GM12878 (cell line): ENCODE measurements at regions of chr4 and their contacts with region 1.

Region 1: DNA sequence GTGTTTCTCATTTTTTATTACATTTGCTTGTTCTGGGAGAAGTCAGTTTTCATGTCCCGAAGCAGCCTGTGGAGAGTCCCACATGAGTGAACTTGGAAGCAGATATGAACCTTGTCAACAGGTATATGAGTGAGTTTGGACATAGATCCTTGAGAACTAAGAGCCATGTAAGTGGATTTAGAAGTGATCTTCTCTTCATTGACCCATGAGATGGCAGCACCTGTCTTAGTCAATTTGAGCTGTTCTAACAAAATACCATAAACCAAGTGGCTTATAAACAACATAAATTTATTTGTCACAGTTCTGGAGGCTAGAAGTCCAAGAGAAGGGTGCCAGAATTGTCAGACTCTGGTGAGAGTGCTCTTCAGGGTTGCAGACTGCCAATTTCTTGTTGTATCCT is 1043.8 kb downstream of the ADGRL3 start:
- DNase-seq: no peak
- ATAC-seq: no peak
- H3K4me3 ChIP-seq: no peak overlapping the region
- H3K27ac ChIP-seq: no peak overlapping the region
- H3K4me1 ChIP-seq: no peaks in the 10 kb centered on the region
- H3K27me3 ChIP-seq: no peaks in the 10 kb centered on the region
- CTCF ChIP-seq: no peak; a peak in 1 of 6 replicates
- EP300 ChIP-seq: no peak
- POLR2A ChIP-seq: no peak
- RAD21 ChIP-seq: peak; percentile 31; the same call in 1 of the 2 replicates

Region 2: GRCh38 chr4:61824454-61824853 is 419.4 kb before region 1 on chr4:
- CTCF ChIA-PET with region 1: no interaction called
- POLR2A ChIA-PET with region 1: no interaction called
- RAD21 ChIA-PET with region 1: no interaction called
- SMC1A ChIA-PET with region 1: no interaction called
- in situ Hi-C with region 1: no loop called
- intact Hi-C with region 1: no loop called
- DNase-seq: no peak
- ATAC-seq: no peak
- H3K4me3 ChIP-seq: no peak overlapping the region
- H3K27ac ChIP-seq: no peak overlapping the region
- H3K4me1 ChIP-seq: no peaks in the 10 kb centered on the region
- H3K27me3 ChIP-seq: no peaks in the 10 kb centered on the region
- CTCF ChIP-seq: no peak
- EP300 ChIP-seq: no peak
- POLR2A ChIP-seq: no peak
- RAD21 ChIP-seq: no peak

Region 3: DNA sequence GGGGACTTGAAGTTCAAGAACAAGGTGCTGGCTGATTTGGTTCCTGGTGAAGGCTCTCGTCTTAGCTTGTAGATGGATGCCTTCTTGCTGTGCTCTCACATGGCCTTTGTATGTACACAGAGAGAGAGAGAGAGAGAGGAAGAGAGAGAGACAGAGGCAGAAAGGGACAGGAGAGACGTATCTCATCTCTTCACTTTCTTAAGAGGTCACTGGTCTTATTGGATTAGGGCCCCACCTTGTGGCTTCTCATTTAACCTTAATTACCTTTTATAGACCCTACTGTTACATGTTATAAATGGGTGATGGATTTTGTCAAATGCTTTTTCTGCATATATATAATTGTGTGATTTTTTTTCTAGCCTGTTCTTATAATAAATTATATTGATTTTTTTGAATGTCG is 400.5 kb after region 1 on chr4:
- CTCF ChIA-PET with region 1: interaction called, 15 read pairs
- POLR2A ChIA-PET with region 1: no interaction called
- RAD21 ChIA-PET with region 1: interaction called, 12 read pairs
- SMC1A ChIA-PET with region 1: interaction called, 15 read pairs
- in situ Hi-C with region 1: no loop called
- intact Hi-C with region 1: no loop called
- DNase-seq: no peak
- ATAC-seq: peak; percentile 86
- H3K4me3 ChIP-seq: no peak overlapping the region
- H3K27ac ChIP-seq: no peak overlapping the region
- H3K4me1 ChIP-seq: no peaks in the 10 kb centered on the region
- H3K27me3 ChIP-seq: no peaks in the 10 kb centered on the region
- CTCF ChIP-seq: peak in 1 of 3 experiments; percentile 45; a peak in 2 of 6 replicates
- EP300 ChIP-seq: no peak
- POLR2A ChIP-seq: no peak
- RAD21 ChIP-seq: peak; percentile 69